HCT116 (cell line): ENCODE measurements at regions of chr14 and their contacts with region 1.

Region 1: DNA sequence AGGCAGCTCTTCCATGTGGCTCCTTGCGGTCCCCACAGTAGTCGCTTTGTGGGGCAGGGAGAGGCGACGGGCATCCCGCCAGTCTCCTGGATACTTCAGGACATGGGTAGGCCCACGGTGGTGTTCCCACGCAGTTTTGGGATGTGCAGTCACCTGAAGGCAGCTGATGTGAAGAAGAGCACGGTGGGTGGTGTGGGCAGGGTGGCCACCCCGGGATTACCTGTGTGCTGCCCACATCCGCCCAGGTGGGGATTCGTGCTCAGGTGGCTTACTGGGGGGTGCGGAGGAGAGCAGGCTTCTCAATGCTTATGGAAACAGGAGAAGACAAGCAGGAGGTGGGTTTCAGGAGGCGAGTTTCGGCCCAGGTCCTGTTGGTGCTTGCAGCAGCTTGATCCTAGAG is 28.4 kb upstream of the TDRD9 start:
- DNase-seq: no peak
- ATAC-seq: no peak
- H3K4me3 ChIP-seq: no peak overlapping the region
- H3K27ac ChIP-seq: no peak overlapping the region
- H3K4me1 ChIP-seq: peaks cover under 1 to 9% of the 10 kb centered on the region in 2 experiments; a peak in 3 of 4 replicates
- H3K27me3 ChIP-seq: no peaks in the 10 kb centered on the region
- CTCF ChIP-seq: no peak
- POLR2A ChIP-seq: no peak
- RAD21 ChIP-seq: no peak

Region 2: DNA sequence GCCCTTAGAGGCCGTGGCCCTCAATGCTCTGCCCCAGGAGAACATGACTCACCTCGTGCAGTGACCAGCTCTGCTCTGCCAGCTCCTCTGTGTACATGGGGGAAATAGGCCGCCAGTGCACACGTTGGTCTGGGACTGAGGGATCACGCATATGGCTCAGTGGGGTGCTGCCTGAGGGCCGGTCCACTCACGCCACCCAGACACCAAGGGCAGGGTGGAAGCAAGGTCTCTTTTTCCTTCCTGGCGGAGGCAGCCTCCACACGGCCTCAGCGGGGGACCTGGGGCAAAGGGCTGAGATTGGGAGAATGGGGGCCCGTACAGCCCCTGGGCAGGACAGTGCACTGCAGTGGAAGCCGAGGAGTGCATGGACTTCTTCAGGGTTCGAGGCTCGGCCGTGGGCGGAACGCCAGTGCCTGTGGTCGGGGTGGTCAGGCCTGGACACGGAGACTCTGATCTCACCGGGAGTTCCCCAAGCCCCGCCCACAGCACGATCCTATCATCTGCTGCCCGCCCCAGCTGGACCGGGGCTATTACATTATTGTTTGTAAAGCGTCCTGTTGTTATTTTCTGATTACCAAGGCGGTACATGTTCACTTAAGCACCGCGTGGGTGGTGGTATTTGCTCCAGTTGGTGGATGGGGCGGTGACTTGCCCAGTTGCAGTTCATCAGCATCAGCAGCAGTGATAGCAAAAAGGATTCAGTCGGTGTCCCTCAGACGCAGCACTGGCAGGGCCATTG is 10.4 kb before region 1 on chr14:
- CTCF ChIA-PET with region 1: interaction called, 30 read pairs
- POLR2A ChIA-PET with region 1: no interaction called
- RAD21 ChIA-PET with region 1: interaction called in 1 of 2 experiments, 4 read pairs
- intact Hi-C with region 1: no loop called
- DNase-seq: no peak
- ATAC-seq: peak; percentile 69
- H3K4me3 ChIP-seq: peak overlapping the region; percentile 15 to 32; a peak in 3 of 4 replicates
- H3K27ac ChIP-seq: peak overlapping the region; percentile 66
- H3K4me1 ChIP-seq: peaks cover 25 to 48% of the 10 kb centered on the region in 2 experiments
- H3K27me3 ChIP-seq: no peaks in the 10 kb centered on the region
- CTCF ChIP-seq: no peak
- POLR2A ChIP-seq: no peak
- RAD21 ChIP-seq: no peak

Region 3: DNA sequence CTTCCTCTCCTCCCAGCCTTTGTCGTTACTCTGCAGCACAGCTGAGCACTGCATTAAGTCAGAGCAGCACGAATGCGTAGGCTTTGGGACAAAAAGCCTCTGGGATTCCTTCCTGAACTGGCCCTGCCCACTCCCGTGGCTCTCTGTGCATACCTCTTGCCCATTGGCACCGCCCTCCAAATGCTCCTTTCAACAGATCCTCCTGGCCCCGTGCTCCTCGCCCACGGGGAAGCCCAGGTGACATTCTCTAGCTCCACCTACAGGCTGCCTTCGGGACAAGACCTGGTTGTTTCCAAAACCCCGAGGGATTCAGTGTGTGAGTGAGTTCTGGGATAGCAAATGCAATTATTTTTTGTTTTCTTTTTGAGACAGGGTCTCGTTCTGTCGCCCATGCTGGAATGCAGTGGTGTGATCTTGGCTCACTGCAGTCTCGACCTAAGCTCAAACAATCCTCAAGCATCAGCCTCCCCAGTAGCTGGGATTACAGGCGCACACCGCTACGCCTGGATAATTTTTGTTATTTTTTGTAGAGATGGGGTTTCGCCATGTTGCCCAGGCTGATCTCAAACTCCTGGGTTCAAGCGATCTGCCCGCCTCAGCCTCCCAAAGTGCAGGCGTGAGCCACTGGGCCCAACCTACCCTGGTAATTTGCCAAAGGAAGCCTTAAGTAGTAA is 10.6 kb after region 1 on chr14:
- CTCF ChIA-PET with region 1: interaction called, 25 read pairs
- POLR2A ChIA-PET with region 1: interaction called, 3 read pairs
- RAD21 ChIA-PET with region 1: no interaction called
- intact Hi-C with region 1: loop called (anchors 1 kb)
- DNase-seq: peak; percentile 86
- ATAC-seq: peak; percentile 100
- H3K4me3 ChIP-seq: 0 out of 4 replicates have a peak overlapping the region, but pooled peaks of 1 of the 2 experiments have one; percentile 4
- H3K27ac ChIP-seq: peak overlapping the region; percentile 49
- H3K4me1 ChIP-seq: peaks cover 5 to 11% of the 10 kb centered on the region in 2 experiments; a peak in 3 of 4 replicates
- H3K27me3 ChIP-seq: no peaks in the 10 kb centered on the region
- CTCF ChIP-seq: peak; percentile 87 to 94 (median 87)
- POLR2A ChIP-seq: no peak
- RAD21 ChIP-seq: peak; percentile 97

Region 4: GRCh38 chr14:104064003-104064402 is 164.2 kb after region 1 on chr14:
- CTCF ChIA-PET with region 1: no interaction called
- POLR2A ChIA-PET with region 1: no interaction called
- RAD21 ChIA-PET with region 1: no interaction called
- intact Hi-C with region 1: no loop called
- DNase-seq: no peak
- ATAC-seq: no peak
- H3K4me3 ChIP-seq: no peak overlapping the region
- H3K27ac ChIP-seq: no peak overlapping the region
- H3K4me1 ChIP-seq: no peaks in the 10 kb centered on the region
- H3K27me3 ChIP-seq: no peaks in the 10 kb centered on the region
- CTCF ChIP-seq: no peak
- POLR2A ChIP-seq: no peak
- RAD21 ChIP-seq: no peak